Aorta (tissue), 5 donors: ENCODE measurements at regions of chr15 and their contacts with region 1.

Region 1: DNA sequence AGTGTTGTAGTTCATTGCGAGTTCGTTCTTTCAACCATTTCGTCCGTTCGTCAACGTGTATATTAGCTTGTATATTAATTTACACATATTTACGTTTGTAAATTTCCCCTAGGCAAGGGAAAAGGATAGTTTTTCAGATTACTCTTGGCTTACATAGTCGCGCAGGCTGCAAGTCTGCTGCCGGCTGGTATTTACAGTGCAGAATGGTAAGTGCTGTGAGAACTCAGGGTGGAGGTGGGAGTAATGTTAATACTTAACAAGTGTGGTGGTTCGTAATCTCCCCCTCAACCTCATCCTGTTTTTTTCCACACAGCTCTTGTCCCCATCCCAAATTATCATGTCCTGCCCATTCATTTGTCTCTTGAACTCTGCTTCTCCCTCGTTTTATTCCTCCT is 766 bp downstream of the FAM98B start:
- DNase-seq: no peak
- ATAC-seq: no peak
- H3K4me3 ChIP-seq: peak overlapping the region; percentile 36 to 91
- H3K27ac ChIP-seq: peak overlapping the region in 1 of 2 donors; percentile 71
- H3K4me1 ChIP-seq: no peaks in the 10 kb centered on the region
- H3K27me3 ChIP-seq: no peaks in the 10 kb centered on the region

Region 2: GRCh38 chr15:38362355-38362754 is 92.3 kb before region 1 on chr15:
- intact Hi-C with region 1: no loop called
- DNase-seq: no peak
- ATAC-seq: no peak
- H3K4me3 ChIP-seq: no peak overlapping the region
- H3K27ac ChIP-seq: no peak overlapping the region
- H3K4me1 ChIP-seq: no peaks in the 10 kb centered on the region
- H3K27me3 ChIP-seq: no peaks in the 10 kb centered on the region

Region 3: DNA sequence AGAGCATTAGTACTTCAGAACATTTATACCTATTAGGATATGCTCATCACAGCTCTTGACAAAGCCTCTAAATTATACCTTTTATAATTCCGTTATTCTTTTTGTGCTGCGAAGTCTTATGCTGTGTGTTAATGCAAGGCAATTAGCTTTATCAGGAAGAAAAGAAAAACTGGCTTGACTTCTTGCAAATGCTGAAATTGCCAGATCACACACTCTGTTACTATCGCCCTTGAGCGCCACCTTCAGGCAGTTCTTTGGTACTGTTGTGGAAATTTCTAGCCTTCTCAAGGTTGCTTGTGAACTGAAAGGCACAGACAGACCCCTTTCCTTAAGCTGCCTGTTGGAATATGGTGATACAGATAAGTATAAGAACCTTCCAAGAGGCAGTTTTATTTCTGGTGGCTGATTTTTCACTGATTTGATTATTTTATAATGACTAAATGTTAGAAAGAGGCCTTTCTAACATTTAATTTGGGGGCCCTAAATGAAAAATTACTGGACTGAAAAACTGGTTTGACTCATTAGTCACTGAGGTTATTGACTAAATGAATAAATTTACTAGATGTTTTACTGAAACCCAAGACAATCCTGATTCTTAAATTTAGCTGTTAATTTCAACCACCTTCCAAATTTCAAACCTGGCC is 236.1 kb after region 1 on chr15:
- intact Hi-C with region 1: loop called in 1 of 2 experiments (anchors 5 kb)
- DNase-seq: peak; percentile 69 to 79
- ATAC-seq: peak; percentile 85
- H3K4me3 ChIP-seq: no peak overlapping the region
- H3K27ac ChIP-seq: no peak overlapping the region
- H3K4me1 ChIP-seq: no peaks in the 10 kb centered on the region
- H3K27me3 ChIP-seq: peaks cover 0 to 2% of the 10 kb centered on the region in 2 donors